Right ventricle myocardium inferior (tissue), 1 donor: ENCODE measurements at regions of chr16 and their contacts with region 1.

Region 1: GRCh38 chr16:68800257-68800875 is 43.0 kb upstream of the TANGO6 start:
- DNase-seq: no peak
- ATAC-seq: no peak

Region 2: GRCh38 chr16:68704232-68704867 is 96.0 kb before region 1 on chr16:
- intact Hi-C with region 1: loop called (anchors 10 kb)
- DNase-seq: peak; percentile 70
- ATAC-seq: peak; percentile 59